Caco-2 (cell line): ENCODE measurements at regions of chr5 and their contacts with region 1.

Region 1: GRCh38 chr5:91070761-91071550 is 312.2 kb downstream of the ARRDC3 start:
- DNase-seq: no peak
- H3K4me3 ChIP-seq: no peak overlapping the region
- H3K4me3 Mint-ChIP-seq: no peak overlapping the region
- H3K27ac Mint-ChIP-seq: no peak overlapping the region
- H3K4me1 ChIP-seq: no peaks in the 10 kb centered on the region
- H3K4me1 Mint-ChIP-seq: no peaks in the 10 kb centered on the region
- H3K27me3 ChIP-seq: no peaks in the 10 kb centered on the region
- H3K27me3 Mint-ChIP-seq: no peaks in the 10 kb centered on the region
- CTCF ChIP-seq: no peak

Region 2: DNA sequence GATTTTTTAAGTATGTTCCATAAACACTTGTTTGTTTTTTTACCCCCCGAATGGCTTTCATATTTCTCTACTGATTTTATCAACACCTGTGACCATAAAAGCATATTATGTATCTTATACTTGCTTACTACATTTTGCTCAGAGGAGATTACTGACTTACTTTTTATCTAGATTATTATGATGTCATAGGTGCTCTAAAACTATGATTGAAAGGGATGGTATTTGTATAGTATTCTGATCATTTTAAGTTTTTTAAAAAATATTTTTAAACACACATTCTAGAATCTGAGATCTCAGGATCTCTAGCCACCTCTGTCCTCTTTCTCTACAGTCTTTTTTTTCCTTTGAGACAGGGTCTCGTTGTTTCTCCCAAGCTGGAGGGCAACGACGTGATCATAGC is 37.3 kb after region 1 on chr5:
- CTCF ChIA-PET with region 1: no interaction called
- POLR2A ChIA-PET with region 1: no interaction called
- intact Hi-C with region 1: loop called (anchors 1 kb)
- DNase-seq: no peak
- H3K4me3 ChIP-seq: no peak overlapping the region
- H3K4me3 Mint-ChIP-seq: no peak overlapping the region
- H3K27ac Mint-ChIP-seq: no peak overlapping the region
- H3K4me1 ChIP-seq: no peaks in the 10 kb centered on the region
- H3K4me1 Mint-ChIP-seq: peaks cover 13% of the 10 kb centered on the region
- H3K27me3 ChIP-seq: no peaks in the 10 kb centered on the region
- H3K27me3 Mint-ChIP-seq: no peaks in the 10 kb centered on the region
- CTCF ChIP-seq: no peak